ENCODE measurements at regions of chrX and their contacts with region 1.

Region 1: GRCh38 chrX:49100704-49101628 is 21.3 kb upstream of the WDR45 start:
- DNase-seq: peak; percentile 93
- H3K4me3 Mint-ChIP-seq: peak overlapping the region; percentile 89
- H3K27ac Mint-ChIP-seq: peak overlapping the region; percentile 89
- H3K4me1 Mint-ChIP-seq: peaks cover 5% of the 10 kb centered on the region
- H3K27me3 Mint-ChIP-seq: no peaks in the 10 kb centered on the region

Region 2: DNA sequence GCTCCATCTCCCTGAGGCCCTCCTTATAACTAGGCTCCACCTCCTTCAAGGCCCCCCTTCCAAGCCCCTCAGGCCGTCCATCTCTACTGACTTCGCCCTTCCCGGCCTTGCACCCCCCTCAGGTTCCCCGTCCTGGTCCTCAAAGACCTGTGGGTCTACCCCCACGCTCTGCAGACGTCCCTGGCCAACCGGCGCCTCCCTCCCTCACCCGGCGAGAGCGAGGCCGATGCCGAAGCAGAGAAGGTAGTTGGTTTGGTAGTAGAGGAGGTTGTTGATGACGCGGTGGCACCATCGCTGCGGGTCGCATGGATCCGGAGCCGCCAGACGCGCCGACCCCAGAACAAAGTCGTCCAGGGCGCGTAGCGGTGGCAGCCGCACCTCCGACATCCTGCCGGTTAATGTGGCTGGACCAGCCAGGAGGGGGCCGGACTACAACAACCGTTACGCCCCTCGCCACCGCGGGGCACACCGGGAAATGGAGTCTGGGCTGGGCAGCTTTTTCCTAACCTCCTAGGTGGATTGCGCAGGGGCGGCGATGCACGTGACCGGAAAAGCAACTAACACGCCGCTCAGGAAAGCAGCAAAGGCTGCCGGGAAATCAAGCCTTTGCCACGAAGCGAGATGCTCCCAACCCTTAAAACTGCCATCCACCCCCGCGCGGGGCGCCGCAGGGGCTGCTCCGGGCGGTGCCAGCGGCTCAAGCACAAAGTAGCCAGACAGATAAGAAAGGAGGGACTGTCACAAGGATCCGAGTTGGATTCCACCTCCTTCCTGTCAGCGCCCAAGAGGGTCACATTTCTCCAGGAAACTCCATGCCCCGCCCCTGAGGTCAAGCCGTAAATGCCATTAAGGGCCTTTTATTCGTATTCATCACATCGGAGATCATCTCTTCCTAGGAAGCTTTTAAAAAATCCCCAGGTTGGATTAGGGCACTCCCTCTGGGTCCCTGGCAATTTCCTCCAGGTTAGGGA is 27.1 kb before region 1 on chrX and contains the start of gene PRAF2:
- CTCF ChIA-PET with region 1: no interaction called
- POLR2A ChIA-PET with region 1: no interaction called
- intact Hi-C with region 1: loop called (anchors 2 kb)
- DNase-seq: peak; percentile 94
- H3K4me3 Mint-ChIP-seq: peak within 1 kb of the TSS; percentile 77
- H3K27ac Mint-ChIP-seq: peak within 1 kb of the TSS; percentile 66
- H3K4me1 Mint-ChIP-seq: peaks cover 14% of the 10 kb centered on the region
- H3K27me3 Mint-ChIP-seq: no peaks in the 10 kb centered on the region
- total RNA-seq, gene PRAF2: 13.2 TPM

Region 3: DNA sequence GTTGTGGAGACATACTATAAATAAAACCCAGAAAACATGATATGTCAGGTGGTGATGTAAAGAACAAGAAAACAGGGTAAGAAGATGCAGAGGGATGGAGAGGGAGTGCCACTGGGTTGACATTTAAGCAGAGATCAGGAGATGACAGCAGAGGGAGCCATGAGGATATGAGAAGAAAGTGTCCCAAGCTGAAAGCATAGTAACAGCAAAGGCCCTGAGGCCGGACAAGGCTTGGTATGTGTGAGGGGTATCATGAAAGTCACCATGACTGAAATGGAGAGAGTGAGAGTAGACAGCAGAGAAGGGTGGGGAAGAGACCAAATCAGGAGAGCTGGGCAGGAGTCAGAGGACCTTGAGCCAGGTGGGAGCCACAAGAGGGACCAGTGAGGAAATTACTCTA is 19.1 kb after region 1 on chrX:
- CTCF ChIA-PET with region 1: no interaction called
- POLR2A ChIA-PET with region 1: no interaction called
- intact Hi-C with region 1: loop called (anchors 2 kb)
- DNase-seq: no peak
- H3K4me3 Mint-ChIP-seq: no peak overlapping the region
- H3K27ac Mint-ChIP-seq: no peak overlapping the region
- H3K4me1 Mint-ChIP-seq: peaks cover 37% of the 10 kb centered on the region
- H3K27me3 Mint-ChIP-seq: no peaks in the 10 kb centered on the region

Region 4: GRCh38 chrX:49155900-49156837 is 55.2 kb after region 1 on chrX:
- CTCF ChIA-PET with region 1: no interaction called
- POLR2A ChIA-PET with region 1: no interaction called
- intact Hi-C with region 1: loop called (anchors 5 kb)
- DNase-seq: peak; percentile 89
- H3K4me3 Mint-ChIP-seq: peak overlapping the region; percentile 86
- H3K27ac Mint-ChIP-seq: peak overlapping the region; percentile 97
- H3K4me1 Mint-ChIP-seq: peaks cover 11% of the 10 kb centered on the region
- H3K27me3 Mint-ChIP-seq: no peaks in the 10 kb centered on the region

Measured in activated CD4-positive, alpha-beta memory T cell treated with anti-CD3 and anti-CD28 coated beads for 36 hours (primary cell).